Activated CD4-positive, alpha-beta T cell treated with anti-CD3 and anti-CD28 coated beads for 36 hours (primary cell): ENCODE measurements at regions of chr22 and their contacts with region 1.

Region 1: GRCh38 chr22:33202455-33202854 is 144.3 kb upstream of the SYN3 start:
- DNase-seq: no peak
- ATAC-seq: no peak
- H3K4me3 Mint-ChIP-seq: no peak overlapping the region
- H3K27ac Mint-ChIP-seq: no peak overlapping the region
- H3K4me1 Mint-ChIP-seq: no peaks in the 10 kb centered on the region
- H3K27me3 Mint-ChIP-seq: peaks cover 18% of the 10 kb centered on the region

Region 2: GRCh38 chr22:33083212-33083611 is 119.2 kb before region 1 on chr22:
- CTCF ChIA-PET with region 1: interaction called, 3 read pairs
- POLR2A ChIA-PET with region 1: no interaction called
- intact Hi-C with region 1: loop called in 1 of 2 experiments (anchors 1 kb)
- DNase-seq: no peak
- ATAC-seq: no peak
- H3K4me3 Mint-ChIP-seq: no peak overlapping the region
- H3K27ac Mint-ChIP-seq: no peak overlapping the region
- H3K4me1 Mint-ChIP-seq: no peaks in the 10 kb centered on the region
- H3K27me3 Mint-ChIP-seq: peaks cover 12% of the 10 kb centered on the region

Region 3: GRCh38 chr22:33260498-33260897 is 58.0 kb after region 1 on chr22:
- CTCF ChIA-PET with region 1: no interaction called
- POLR2A ChIA-PET with region 1: no interaction called
- intact Hi-C with region 1: no loop called
- DNase-seq: no peak
- ATAC-seq: no peak
- H3K4me3 Mint-ChIP-seq: no peak overlapping the region
- H3K27ac Mint-ChIP-seq: no peak overlapping the region
- H3K4me1 Mint-ChIP-seq: no peaks in the 10 kb centered on the region
- H3K27me3 Mint-ChIP-seq: peaks cover 17% of the 10 kb centered on the region